ENCODE measurements at regions of chr1 and their contacts with region 1.

Region 1: DNA sequence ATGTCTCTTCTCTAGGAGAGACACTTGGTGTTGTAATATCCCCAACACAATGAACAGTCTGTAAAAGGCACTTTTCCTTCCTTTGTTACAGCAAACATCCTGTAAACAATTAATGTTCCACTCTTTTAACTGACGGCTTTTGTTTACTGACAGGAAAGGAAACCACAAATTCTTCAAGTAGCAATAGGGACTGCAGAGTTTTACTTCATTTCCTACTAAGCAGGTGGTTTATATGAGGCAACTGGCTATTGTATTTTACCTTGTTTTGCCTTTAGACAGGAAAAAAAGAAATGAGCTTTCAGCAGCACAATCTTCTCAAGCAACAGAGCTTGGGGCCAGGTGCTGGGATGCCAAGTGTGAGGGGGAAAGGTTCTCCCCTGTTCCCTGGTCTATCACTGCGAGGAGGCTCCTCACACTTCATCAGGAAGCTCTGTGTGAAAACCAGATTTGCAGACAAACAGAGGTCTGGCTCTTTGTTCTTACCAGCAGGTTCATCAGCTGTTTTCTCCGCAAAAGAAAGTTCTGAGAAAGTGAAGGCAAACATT is 51.2 kb downstream of the SIPA1L2 start:
- DNase-seq: peak; percentile 81
- H3K4me3 ChIP-seq: peak overlapping the region; percentile 47
- H3K27ac ChIP-seq: peak overlapping the region; percentile 93
- H3K4me1 ChIP-seq: peaks cover 79% of the 10 kb centered on the region
- CTCF ChIP-seq: no peak

Region 2: GRCh38 chr1:231786126-231786525 is 792.6 kb before region 1 on chr1:
- CTCF ChIA-PET with region 1: no interaction called
- POLR2A ChIA-PET with region 1: no interaction called
- intact Hi-C with region 1: no loop called
- DNase-seq: no peak
- H3K4me3 ChIP-seq: no peak overlapping the region
- H3K27ac ChIP-seq: no peak overlapping the region
- H3K4me1 ChIP-seq: no peaks in the 10 kb centered on the region
- CTCF ChIP-seq: no peak

Region 3: DNA sequence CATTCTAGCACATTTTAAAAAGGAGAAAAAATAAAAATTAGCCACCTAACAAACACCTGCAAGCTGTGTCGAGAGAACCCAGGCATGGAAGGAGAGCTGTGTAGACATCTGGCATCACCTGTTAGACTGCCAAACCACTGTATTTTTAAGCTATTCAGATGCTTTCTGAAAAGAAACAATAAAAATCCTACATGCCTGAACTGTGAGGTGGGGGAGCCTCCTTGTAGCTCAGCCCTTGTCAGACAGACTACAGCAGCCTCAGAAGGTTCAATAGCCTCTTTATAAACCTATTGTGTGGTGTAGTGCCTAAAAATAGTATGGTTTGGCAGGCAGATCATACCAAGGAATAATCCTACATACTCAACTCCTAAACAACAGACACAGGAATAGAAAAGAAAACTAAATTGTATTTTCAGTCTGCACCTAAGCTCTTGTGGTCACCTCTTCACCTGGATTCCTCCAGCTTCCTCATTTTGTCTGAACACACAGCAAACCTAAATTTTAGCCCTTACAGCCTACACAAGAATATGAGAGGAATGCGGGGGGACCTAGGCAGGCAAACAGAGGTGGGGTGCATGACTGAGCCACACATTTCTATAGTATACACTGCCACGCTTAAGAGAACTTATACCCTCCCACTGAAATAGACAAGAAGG is 15.7 kb before region 1 on chr1:
- CTCF ChIA-PET with region 1: interaction called, 4 read pairs
- POLR2A ChIA-PET with region 1: interaction called, 28 read pairs
- intact Hi-C with region 1: no loop called
- DNase-seq: peak; percentile 85
- H3K4me3 ChIP-seq: peak overlapping the region; percentile 33
- H3K27ac ChIP-seq: peak overlapping the region; percentile 96
- H3K4me1 ChIP-seq: peaks cover 100% of the 10 kb centered on the region
- CTCF ChIP-seq: no peak

Region 4: GRCh38 chr1:232568331-232568852 is 10.3 kb before region 1 on chr1:
- CTCF ChIA-PET with region 1: interaction called, 4 read pairs
- POLR2A ChIA-PET with region 1: interaction called, 28 read pairs
- intact Hi-C with region 1: no loop called
- DNase-seq: no peak
- H3K4me3 ChIP-seq: no peak overlapping the region
- H3K27ac ChIP-seq: peak overlapping the region; percentile 9
- H3K4me1 ChIP-seq: peaks cover 88% of the 10 kb centered on the region
- CTCF ChIP-seq: no peak

Region 5: GRCh38 chr1:232593717-232594502 is 15.2 kb after region 1 on chr1:
- CTCF ChIA-PET with region 1: interaction called, 3 read pairs
- POLR2A ChIA-PET with region 1: interaction called, 14 read pairs
- intact Hi-C with region 1: loop called (anchors 2 kb)
- DNase-seq: no peak
- H3K4me3 ChIP-seq: no peak overlapping the region
- H3K27ac ChIP-seq: no peak overlapping the region
- H3K4me1 ChIP-seq: peaks cover 99% of the 10 kb centered on the region
- CTCF ChIP-seq: no peak

Region 6: GRCh38 chr1:232599178-232600041 is 20.7 kb after region 1 on chr1:
- CTCF ChIA-PET with region 1: interaction called, 3 read pairs
- POLR2A ChIA-PET with region 1: interaction called, 14 read pairs
- intact Hi-C with region 1: loop called (anchors 2 kb)
- DNase-seq: peak; percentile 69
- H3K4me3 ChIP-seq: peak overlapping the region; percentile 29
- H3K27ac ChIP-seq: peak overlapping the region; percentile 42
- H3K4me1 ChIP-seq: peaks cover 73% of the 10 kb centered on the region
- CTCF ChIP-seq: no peak